CD14-positive monocyte (primary cell): ENCODE measurements at regions of chr11 and their contacts with region 1.

Region 1: DNA sequence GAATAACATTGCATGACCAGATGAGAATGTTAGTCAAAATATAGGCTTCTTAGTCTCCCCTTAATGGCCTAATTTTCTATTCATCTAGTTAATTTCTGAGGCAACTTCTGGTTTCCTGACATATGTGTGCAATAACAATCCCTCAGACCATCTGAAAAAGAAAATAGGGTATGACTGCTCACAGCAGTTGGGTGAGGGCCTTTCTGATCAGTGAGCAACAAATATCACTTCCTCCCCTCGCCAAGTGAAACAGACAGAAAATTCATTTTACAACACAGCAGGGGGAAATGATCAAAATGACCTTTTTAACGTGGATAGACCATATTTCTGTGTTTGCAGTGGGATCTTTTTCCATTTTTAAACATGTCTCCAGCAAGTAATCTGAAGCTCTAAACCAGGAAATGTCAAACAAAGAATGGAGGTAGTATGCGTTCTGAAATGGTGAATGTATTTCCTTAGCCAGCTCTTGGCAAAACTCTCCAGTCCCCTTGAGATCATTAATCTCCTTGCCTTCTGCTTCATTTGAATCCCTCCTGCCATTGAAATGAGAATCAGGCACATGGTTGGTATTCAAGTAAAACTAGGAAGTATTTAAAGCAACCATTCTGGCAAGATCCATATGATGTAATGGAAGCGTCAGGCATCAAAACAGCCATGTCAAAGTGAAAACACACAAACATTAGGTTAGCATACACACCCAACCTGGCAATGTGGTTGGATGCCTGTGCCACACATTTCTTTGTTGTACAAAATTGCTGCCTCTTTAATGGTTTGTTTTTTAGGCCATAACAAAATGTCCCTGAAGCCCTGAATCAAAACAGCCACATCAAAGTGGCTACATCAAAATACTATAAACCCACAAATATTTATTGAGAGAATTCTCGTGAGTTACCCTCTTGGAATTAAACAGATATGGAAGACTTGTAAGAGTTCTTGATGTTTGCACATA is 100.1 kb downstream of the SLC1A2 start:
- DNase-seq: peak; percentile 49 to 60 (median 57)
- H3K4me3 ChIP-seq: no peak overlapping the region
- H3K4me3 Mint-ChIP-seq: no peak overlapping the region
- H3K27ac ChIP-seq: peak overlapping the region in 1 of 2 donors; percentile 72
- H3K27ac Mint-ChIP-seq: peak overlapping the region; percentile 78 to 91 (median 86)
- H3K4me1 ChIP-seq: peaks cover 19 to 22% of the 10 kb centered on the region in 2 donors
- H3K4me1 Mint-ChIP-seq: peaks cover 16% of the 10 kb centered on the region
- H3K27me3 ChIP-seq: no peaks in the 10 kb centered on the region
- H3K27me3 Mint-ChIP-seq: peaks cover 0 to 2% (median 1%) of the 10 kb centered on the region in 3 donors
- CTCF ChIP-seq: no peak

Region 2: GRCh38 chr11:35347921-35348331 is 28.7 kb after region 1 on chr11:
- intact Hi-C with region 1: loop called in 1 of 2 experiments (anchors 5 kb)
- DNase-seq: peak in 1 of 3 donors; percentile 18
- H3K4me3 ChIP-seq: no peak overlapping the region
- H3K4me3 Mint-ChIP-seq: no peak overlapping the region
- H3K27ac ChIP-seq: peak overlapping the region; percentile 9 to 18
- H3K27ac Mint-ChIP-seq: peak overlapping the region in 4 of 7 donors; percentile 3 to 25 (median 16)
- H3K4me1 ChIP-seq: peaks cover 47 to 68% of the 10 kb centered on the region in 2 donors
- H3K4me1 Mint-ChIP-seq: peaks cover 62% of the 10 kb centered on the region
- H3K27me3 ChIP-seq: no peaks in the 10 kb centered on the region
- H3K27me3 Mint-ChIP-seq: peaks cover 0 to 4% (median 1%) of the 10 kb centered on the region in 3 donors
- CTCF ChIP-seq: no peak